ENCODE measurements at regions of chr18 and their contacts with region 1.

Region 1: GRCh38 chr18:67590571-67591141 is 74.1 kb upstream of the DSEL start:
- DNase-seq: no peak
- H3K4me3 Mint-ChIP-seq: no peak overlapping the region
- H3K27ac Mint-ChIP-seq: peak overlapping the region; percentile 52
- H3K4me1 Mint-ChIP-seq: no peaks in the 10 kb centered on the region
- H3K27me3 Mint-ChIP-seq: no peaks in the 10 kb centered on the region
- CTCF ChIP-seq: no peak

Region 2: DNA sequence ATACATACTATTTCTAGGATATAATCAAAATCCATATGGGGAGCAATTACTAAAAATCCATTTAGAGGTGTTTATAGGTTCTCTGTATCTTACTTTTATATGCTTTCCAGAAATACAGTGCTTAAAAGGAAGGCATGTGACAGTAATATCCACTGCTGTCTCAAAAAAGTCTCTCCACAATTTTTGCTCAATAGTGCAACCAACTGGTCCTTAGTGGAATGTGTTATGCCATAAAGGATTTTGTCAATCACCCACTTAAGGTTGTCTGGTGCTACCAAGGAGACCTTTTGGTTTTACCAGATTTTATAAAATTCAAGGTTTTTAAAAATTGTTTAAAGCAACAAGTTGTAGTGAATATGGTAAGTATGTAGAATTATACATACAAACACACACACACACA is 254.4 kb after region 1 on chr18:
- CTCF ChIA-PET with region 1: no interaction called
- intact Hi-C with region 1: loop called (anchors 10 kb)
- DNase-seq: no peak
- H3K4me3 Mint-ChIP-seq: no peak overlapping the region
- H3K27ac Mint-ChIP-seq: no peak overlapping the region
- H3K4me1 Mint-ChIP-seq: peaks cover 9% of the 10 kb centered on the region
- H3K27me3 Mint-ChIP-seq: no peaks in the 10 kb centered on the region
- CTCF ChIP-seq: no peak

Measured in Calu3 (cell line).